AG04450 (cell line): ENCODE measurements at regions of chr15 and their contacts with region 1.

Region 1: DNA sequence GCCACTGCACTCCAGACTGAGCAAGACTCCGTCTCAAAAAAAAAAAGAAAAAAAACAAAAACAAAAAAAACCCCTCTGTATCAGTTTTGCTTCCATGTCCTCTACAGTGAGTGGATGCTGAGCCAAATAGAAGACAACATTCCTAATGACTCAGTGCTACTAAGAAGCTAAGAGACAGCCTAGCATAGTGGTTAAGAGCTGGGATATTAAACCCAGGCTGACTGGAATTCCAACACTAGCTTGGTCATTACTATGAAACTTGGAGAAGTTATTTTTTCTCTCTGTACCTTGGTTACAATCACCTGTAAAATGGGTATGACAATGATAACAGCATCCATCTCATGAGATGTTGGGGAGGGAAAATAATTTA is 60.9 kb upstream of the PYGO1 start:
- DNase-seq: peak; percentile 27
- H3K4me3 ChIP-seq: no peak overlapping the region
- H3K27ac ChIP-seq: no peak overlapping the region
- H3K27me3 ChIP-seq: no peaks in the 10 kb centered on the region
- CTCF ChIP-seq: no peak

Region 2: GRCh38 chr15:55344206-55344605 is 304.8 kb before region 1 on chr15:
- CTCF ChIA-PET with region 1: no interaction called
- POLR2A ChIA-PET with region 1: no interaction called
- DNase-seq: no peak
- H3K4me3 ChIP-seq: no peak overlapping the region
- H3K27ac ChIP-seq: no peak overlapping the region
- H3K27me3 ChIP-seq: no peaks in the 10 kb centered on the region
- CTCF ChIP-seq: no peak

Region 3: DNA sequence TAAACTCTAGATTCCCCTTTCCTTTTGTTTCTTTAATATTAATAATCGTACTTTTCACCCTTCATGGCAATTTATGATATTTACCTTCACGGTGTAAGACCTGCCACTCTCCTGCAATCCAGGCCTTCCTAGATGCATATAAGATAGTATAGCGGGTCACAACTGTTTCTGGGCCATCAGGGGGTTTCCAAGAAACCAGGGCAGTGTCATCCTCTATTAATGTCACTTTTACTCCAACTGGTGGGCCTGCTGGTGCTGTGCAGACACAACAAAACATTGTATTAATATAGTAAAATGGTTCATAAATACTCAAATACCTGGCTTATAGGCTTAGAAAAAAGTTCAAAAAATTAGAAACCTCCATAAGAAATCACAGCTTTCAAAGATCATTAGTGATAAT is 12.0 kb before region 1 on chr15:
- CTCF ChIA-PET with region 1: interaction called, 10 read pairs
- POLR2A ChIA-PET with region 1: no interaction called
- DNase-seq: no peak
- H3K4me3 ChIP-seq: no peak overlapping the region
- H3K27ac ChIP-seq: no peak overlapping the region
- H3K27me3 ChIP-seq: no peaks in the 10 kb centered on the region
- CTCF ChIP-seq: no peak

Region 4: GRCh38 chr15:55669270-55669669 is 20.2 kb after region 1 on chr15:
- CTCF ChIA-PET with region 1: interaction called, 11 read pairs
- POLR2A ChIA-PET with region 1: no interaction called
- DNase-seq: no peak
- H3K4me3 ChIP-seq: no peak overlapping the region
- H3K27ac ChIP-seq: no peak overlapping the region
- H3K27me3 ChIP-seq: no peaks in the 10 kb centered on the region
- CTCF ChIP-seq: no peak

Region 5: DNA sequence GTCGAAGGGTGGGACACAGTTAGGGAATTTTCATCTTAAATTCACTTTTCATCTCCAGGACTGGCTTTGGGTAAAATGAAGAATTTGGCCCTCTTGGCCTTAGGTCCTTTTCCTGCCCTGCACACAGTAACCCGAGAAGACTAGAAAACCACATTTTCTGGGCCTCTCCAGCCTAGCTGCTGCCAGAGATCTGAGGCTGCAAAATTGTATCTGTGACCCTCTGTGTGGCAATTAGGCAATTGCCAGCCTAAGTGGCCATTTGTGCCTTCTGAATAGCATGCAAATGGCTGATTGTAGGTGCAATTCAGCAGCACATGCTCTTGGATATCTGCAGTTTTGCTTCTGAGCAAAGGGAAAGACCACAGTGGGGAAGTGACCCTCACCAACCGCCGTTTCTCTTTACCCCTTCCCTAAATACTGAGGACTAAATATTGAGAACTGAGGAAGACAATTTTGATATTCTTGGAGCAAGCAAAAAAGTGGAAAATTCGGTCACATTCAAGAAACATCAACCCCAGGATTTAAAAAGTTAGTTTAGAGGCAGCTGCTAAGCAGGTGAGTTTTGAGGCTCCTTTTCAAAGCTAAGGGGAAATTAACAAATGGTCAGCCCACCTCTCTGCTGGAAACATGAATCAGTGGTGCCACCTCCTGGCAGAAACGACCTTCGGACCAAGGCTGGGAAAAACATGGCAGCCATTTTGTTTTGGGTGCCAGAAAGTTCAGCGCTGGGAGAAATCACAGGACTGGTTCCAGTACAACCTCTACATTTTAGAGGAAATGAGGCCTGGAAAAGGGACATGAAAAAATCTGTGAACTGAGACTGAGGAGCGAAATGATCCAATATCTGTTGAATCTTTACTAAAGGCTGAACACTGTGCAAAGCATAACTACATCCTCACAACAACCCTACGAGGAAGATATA is 150.5 kb after region 1 on chr15:
- CTCF ChIA-PET with region 1: interaction called, 20 read pairs
- POLR2A ChIA-PET with region 1: no interaction called
- DNase-seq: no peak
- H3K4me3 ChIP-seq: no peak overlapping the region
- H3K27ac ChIP-seq: no peak overlapping the region
- H3K27me3 ChIP-seq: peaks cover 23% of the 10 kb centered on the region
- CTCF ChIP-seq: peak; percentile 72

Region 6: GRCh38 chr15:55846116-55846707 is 197.2 kb after region 1 on chr15:
- CTCF ChIA-PET with region 1: interaction called, 56 read pairs
- POLR2A ChIA-PET with region 1: no interaction called
- DNase-seq: peak; percentile 71
- H3K4me3 ChIP-seq: no peak overlapping the region
- H3K27ac ChIP-seq: no peak overlapping the region
- H3K27me3 ChIP-seq: no peaks in the 10 kb centered on the region
- CTCF ChIP-seq: peak; percentile 87

Region 7: GRCh38 chr15:56052395-56053045 is 403.5 kb after region 1 on chr15:
- CTCF ChIA-PET with region 1: interaction called, 16 read pairs
- POLR2A ChIA-PET with region 1: no interaction called
- DNase-seq: no peak
- H3K4me3 ChIP-seq: no peak overlapping the region
- H3K27ac ChIP-seq: no peak overlapping the region
- H3K27me3 ChIP-seq: no peaks in the 10 kb centered on the region
- CTCF ChIP-seq: peak; percentile 77

Region 8: DNA sequence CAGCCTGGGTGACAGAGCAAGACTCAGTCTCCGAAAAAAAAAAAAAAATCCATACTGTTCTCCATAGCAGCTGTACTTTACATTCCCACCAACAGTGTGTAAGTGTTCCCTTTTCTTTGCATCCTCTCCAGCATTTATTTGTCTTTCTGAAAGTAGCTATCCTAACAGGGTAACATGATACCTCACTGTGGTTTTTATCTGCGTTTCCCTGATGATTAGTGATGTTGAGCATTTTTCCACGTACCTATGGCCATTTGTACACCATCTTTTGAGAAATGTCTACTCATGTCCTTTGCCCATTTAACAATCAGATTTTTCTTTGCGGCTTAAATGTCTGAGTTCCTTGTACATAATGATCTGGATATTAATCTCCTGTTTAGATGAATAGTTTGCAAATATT is 475.4 kb after region 1 on chr15:
- CTCF ChIA-PET with region 1: no interaction called
- POLR2A ChIA-PET with region 1: no interaction called
- DNase-seq: no peak
- H3K4me3 ChIP-seq: no peak overlapping the region
- H3K27ac ChIP-seq: no peak overlapping the region
- H3K27me3 ChIP-seq: no peaks in the 10 kb centered on the region
- CTCF ChIP-seq: no peak